Calu3 (cell line): ENCODE measurements at regions of chr12 and their contacts with region 1.

Region 1: GRCh38 chr12:77640356-77640755 is 190.3 kb upstream of the NAV3 start:
- DNase-seq: no peak
- H3K4me3 Mint-ChIP-seq: no peak overlapping the region
- H3K27ac Mint-ChIP-seq: no peak overlapping the region
- H3K4me1 Mint-ChIP-seq: no peaks in the 10 kb centered on the region
- H3K27me3 Mint-ChIP-seq: no peaks in the 10 kb centered on the region
- CTCF ChIP-seq: no peak

Region 2: GRCh38 chr12:77537648-77538047 is 102.7 kb before region 1 on chr12:
- CTCF ChIA-PET with region 1: no interaction called
- intact Hi-C with region 1: no loop called
- DNase-seq: no peak
- H3K4me3 Mint-ChIP-seq: no peak overlapping the region
- H3K27ac Mint-ChIP-seq: no peak overlapping the region
- H3K4me1 Mint-ChIP-seq: no peaks in the 10 kb centered on the region
- H3K27me3 Mint-ChIP-seq: no peaks in the 10 kb centered on the region
- CTCF ChIP-seq: no peak

Region 3: GRCh38 chr12:77578466-77579220 is 61.7 kb before region 1 on chr12:
- CTCF ChIA-PET with region 1: no interaction called
- intact Hi-C with region 1: loop called (anchors 2 kb)
- DNase-seq: no peak
- H3K4me3 Mint-ChIP-seq: no peak overlapping the region
- H3K27ac Mint-ChIP-seq: no peak overlapping the region
- H3K4me1 Mint-ChIP-seq: no peaks in the 10 kb centered on the region
- H3K27me3 Mint-ChIP-seq: no peaks in the 10 kb centered on the region
- CTCF ChIP-seq: no peak

Region 4: DNA sequence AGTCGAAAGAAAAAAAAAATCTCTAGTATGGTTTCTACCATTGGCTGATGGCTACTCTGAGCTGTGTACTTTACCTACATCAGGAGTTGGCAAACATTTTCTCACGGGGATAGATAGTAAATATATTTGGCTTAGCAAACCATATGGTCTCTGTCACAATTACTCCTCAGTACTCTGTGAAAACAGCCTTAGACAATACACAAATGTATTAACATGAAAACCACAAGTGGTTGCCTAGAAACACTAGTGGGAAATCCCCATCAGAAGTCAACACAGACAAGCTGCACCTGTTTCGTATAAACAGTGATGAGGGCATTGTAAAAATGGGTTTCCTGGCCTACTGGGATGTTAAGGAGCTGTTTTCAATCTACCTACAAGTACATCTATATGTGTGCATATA is 105.7 kb after region 1 on chr12:
- CTCF ChIA-PET with region 1: no interaction called
- intact Hi-C with region 1: no loop called
- DNase-seq: peak; percentile 40
- H3K4me3 Mint-ChIP-seq: no peak overlapping the region
- H3K27ac Mint-ChIP-seq: peak overlapping the region; percentile 24
- H3K4me1 Mint-ChIP-seq: peaks cover 20% of the 10 kb centered on the region
- H3K27me3 Mint-ChIP-seq: no peaks in the 10 kb centered on the region
- CTCF ChIP-seq: no peak